ENCODE measurements at regions of chr17 and their contacts with region 1.

Region 1: DNA sequence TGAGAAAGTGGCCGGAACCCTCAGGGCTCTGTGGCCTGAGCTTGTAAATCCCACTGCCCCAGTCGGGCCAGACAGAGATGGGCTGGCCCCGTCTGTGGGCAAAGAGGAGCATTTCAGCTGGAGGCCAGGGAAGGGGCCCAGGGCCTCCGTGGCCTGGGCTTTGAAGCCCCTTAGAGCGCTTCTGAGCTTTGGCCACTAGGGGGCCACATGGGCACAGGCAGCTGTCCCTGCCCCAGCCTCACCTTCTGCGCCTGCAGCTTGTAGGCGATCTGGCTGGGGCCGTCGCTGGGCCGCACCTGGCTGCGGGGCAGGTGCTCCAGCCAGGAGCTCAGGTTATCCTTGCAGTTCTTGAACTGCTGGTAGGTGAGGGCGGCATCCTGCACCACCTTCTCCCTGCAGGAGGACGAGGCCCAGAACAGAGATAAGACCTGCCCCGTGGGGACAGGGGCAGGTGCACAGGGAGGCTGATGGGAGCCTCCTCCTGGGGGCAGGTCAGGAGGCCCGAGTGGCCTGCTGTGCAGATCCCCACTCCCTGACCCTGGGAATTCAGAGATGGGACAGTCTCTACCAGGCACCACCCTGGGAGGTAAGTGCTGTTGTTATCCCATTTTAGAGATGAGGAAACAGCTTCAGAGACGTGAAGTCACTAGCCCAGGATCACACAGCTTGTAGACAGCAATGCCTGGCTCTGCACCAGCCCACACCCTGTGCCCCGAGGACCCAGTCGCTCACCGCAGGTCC is 12.8 kb downstream of the EVPL start:
- DNase-seq: peak; percentile 85
- ATAC-seq: peak; percentile 98
- H3K4me3 Mint-ChIP-seq: no peak overlapping the region
- H3K27ac Mint-ChIP-seq: no peak overlapping the region
- H3K4me1 Mint-ChIP-seq: peaks cover 4% of the 10 kb centered on the region
- H3K27me3 Mint-ChIP-seq: no peaks in the 10 kb centered on the region

Region 2: DNA sequence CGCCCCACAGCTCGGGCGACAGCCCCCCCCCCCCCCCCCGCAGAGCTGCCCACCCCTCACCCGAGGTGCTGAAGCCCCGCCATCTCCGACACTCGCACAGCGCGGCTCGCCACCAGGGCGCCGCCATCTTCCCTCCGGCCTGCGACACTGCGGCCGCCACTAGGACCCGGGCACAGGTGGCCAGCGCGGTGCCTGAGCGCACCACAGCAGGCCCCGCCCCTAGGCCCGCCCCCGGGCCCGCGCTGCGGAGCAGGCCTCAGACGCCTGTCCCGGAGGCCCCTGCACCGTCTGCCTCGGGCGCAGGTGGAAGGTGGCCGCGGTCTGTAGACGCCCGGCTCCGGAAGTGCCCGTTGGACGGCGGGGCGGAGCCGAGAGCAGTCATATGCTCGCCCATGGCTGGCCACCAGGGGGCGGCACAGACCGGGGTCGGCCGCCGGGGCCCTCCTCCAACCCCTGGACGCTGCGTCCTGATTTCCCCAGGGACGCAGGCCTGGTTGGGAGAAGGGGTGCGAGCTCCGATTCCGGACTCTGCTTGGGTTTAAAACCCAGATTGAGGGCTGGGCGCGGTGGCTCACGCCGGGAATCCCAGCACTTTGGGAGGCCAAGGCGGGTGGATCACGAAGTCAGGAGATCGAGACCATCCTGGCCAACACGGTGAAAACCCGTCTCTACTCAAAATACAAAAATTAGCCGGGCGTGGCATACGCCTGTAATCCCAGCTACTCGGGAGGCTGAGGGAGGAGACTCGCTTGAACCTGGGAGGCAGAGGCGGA is 109.4 kb before region 1 on chr17 and contains the start of gene MRPL38:
- CTCF ChIA-PET with region 1: interaction called, 29 read pairs
- DNase-seq: peak; percentile 98
- ATAC-seq: peak; percentile 98
- H3K4me3 Mint-ChIP-seq: peak within 1 kb of the TSS; percentile 86
- H3K27ac Mint-ChIP-seq: peak within 1 kb of the TSS; percentile 85
- H3K4me1 Mint-ChIP-seq: peaks cover 20% of the 10 kb centered on the region
- H3K27me3 Mint-ChIP-seq: no peaks in the 10 kb centered on the region
- total RNA-seq, gene MRPL38: 115 to 139 TPM

Region 3: DNA sequence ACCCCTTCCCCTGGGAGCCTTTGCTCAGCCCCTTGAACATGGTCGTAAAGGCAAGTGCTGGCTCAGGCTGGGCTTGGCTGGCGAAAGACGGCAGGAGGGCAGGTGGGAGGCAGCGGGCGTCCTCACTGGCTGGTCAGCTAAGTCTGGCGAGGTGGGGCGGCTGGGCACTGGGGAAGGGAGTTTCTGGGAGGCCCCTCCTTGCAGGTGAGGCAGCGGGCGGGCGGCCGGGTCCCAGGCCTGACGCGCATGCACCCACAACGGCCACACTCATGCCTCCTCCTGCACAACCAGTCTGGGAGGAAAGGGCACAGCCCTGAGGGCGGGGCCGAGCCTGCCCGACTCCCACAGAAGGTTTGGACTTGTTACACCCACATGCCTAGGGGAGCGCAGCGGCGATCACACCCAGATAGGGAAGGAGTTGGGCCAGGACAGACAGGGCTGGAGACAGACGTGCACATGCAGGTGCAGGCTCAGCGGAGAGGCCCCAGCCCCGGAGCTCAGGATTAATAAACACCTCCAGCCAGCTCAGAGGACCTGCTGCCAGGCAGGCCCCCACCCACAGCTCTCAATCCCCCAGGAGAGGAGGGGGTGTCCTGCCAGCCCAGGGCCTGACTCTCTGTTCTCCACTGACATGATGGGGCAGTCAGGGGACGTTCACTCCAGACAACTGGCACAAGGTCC is 12.9 kb after region 1 on chr17 and contains the start of gene EVPL:
- CTCF ChIA-PET with region 1: interaction called, 21 read pairs
- DNase-seq: no peak
- ATAC-seq: no peak
- H3K4me3 Mint-ChIP-seq: no peak within 1 kb of the TSS
- H3K27ac Mint-ChIP-seq: no peak within 1 kb of the TSS
- H3K4me1 Mint-ChIP-seq: peaks cover 12% of the 10 kb centered on the region
- H3K27me3 Mint-ChIP-seq: no peaks in the 10 kb centered on the region
- total RNA-seq, gene EVPL: 0.03 TPM in 1 of 2 experiments, not detected in the other

Region 4: DNA sequence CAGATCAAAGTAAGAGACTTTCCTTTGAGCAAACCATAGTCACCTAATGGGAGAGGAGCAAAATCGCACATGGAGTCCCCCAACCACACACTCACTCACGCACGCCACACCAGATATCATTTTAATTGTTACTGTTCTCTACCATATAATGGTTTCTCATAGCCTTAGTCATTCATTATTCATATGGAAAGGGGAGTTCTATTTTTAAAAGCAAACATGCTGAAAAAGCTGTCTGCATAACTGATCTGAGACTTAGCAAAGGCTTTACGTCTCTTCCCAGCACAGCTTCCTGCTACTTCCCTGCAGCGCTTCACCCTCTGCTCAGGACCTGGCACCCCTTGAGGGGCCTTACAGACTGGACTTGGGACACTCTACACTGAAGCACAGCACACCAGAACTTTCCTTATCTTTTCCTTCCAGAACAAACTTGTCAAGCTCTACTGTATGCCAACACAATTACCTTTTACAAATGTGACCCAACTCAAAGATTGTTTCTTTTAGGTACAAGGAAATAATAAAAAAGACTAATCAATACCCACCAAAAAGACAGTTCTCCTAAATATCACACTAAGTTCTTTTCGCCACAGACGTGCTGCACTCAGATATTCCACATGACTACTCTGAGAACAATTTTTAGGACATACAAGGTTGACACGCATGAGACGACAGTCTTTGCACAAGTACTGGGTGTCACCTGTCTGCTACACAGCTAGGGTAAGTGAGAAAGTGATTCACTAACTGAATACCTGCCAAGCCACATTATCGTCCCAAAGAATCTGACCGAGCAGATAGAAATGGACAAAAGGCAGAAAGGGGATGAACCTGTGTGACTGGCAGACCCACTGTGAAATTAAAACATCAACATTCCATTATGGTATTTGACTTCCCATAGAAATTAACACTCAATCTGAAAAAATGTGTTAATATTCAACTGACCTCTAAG is 36.5 kb after region 1 on chr17:
- CTCF ChIA-PET with region 1: interaction called, 62 read pairs
- DNase-seq: no peak
- ATAC-seq: no peak
- H3K4me3 Mint-ChIP-seq: no peak overlapping the region
- H3K27ac Mint-ChIP-seq: no peak overlapping the region
- H3K4me1 Mint-ChIP-seq: peaks cover 6% of the 10 kb centered on the region
- H3K27me3 Mint-ChIP-seq: no peaks in the 10 kb centered on the region

Region 5: GRCh38 chr17:76063875-76064546 is 49.7 kb after region 1 on chr17:
- CTCF ChIA-PET with region 1: interaction called, 62 read pairs
- DNase-seq: peak; percentile 74
- ATAC-seq: peak; percentile 94
- H3K4me3 Mint-ChIP-seq: peak overlapping the region; percentile 57
- H3K27ac Mint-ChIP-seq: peak overlapping the region; percentile 87
- H3K4me1 Mint-ChIP-seq: peaks cover 25% of the 10 kb centered on the region
- H3K27me3 Mint-ChIP-seq: no peaks in the 10 kb centered on the region

Region 6: GRCh38 chr17:76103274-76104139 is 89.2 kb after region 1 on chr17 and contains the start of gene EXOC7:
- CTCF ChIA-PET with region 1: interaction called, 21 read pairs
- DNase-seq: peak; percentile 94
- ATAC-seq: peak; percentile 94
- H3K4me3 Mint-ChIP-seq: peak within 1 kb of the TSS; percentile 98
- H3K27ac Mint-ChIP-seq: peak within 1 kb of the TSS; percentile 97
- H3K4me1 Mint-ChIP-seq: peaks cover 16% of the 10 kb centered on the region
- H3K27me3 Mint-ChIP-seq: no peaks in the 10 kb centered on the region
- total RNA-seq, gene EXOC7: 132 to 137 TPM

Region 7: GRCh38 chr17:76296186-76296585 is 281.8 kb after region 1 on chr17:
- CTCF ChIA-PET with region 1: interaction called, 46 read pairs
- DNase-seq: no peak
- ATAC-seq: no peak
- H3K4me3 Mint-ChIP-seq: no peak overlapping the region
- H3K27ac Mint-ChIP-seq: no peak overlapping the region
- H3K4me1 Mint-ChIP-seq: peaks cover 3% of the 10 kb centered on the region
- H3K27me3 Mint-ChIP-seq: no peaks in the 10 kb centered on the region

Region 8: DNA sequence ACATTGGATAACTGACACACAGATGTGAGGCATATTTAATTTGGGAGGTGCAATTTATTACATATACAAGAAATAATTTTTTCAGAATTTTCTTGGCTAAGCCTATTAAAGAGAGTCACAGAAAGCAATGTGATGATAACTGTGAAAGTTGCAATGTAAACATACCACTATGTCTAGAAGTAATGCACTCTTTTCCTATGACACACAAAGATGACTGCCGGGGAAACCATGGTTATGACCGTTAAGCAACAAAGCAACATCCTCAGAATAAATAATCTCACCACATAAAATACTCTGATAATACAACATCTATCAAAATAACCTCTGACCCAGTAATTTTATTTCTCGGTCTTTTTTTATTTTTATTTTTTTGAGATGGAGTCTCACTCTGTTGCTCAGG is 304.2 kb after region 1 on chr17:
- CTCF ChIA-PET with region 1: no interaction called
- DNase-seq: no peak
- ATAC-seq: no peak
- H3K4me3 Mint-ChIP-seq: no peak overlapping the region
- H3K27ac Mint-ChIP-seq: no peak overlapping the region
- H3K4me1 Mint-ChIP-seq: peaks cover 3% of the 10 kb centered on the region
- H3K27me3 Mint-ChIP-seq: no peaks in the 10 kb centered on the region

Region 9: GRCh38 chr17:76370261-76370993 is 356.1 kb after region 1 on chr17:
- CTCF ChIA-PET with region 1: no interaction called
- DNase-seq: no peak
- ATAC-seq: no peak
- H3K4me3 Mint-ChIP-seq: no peak overlapping the region
- H3K27ac Mint-ChIP-seq: no peak overlapping the region
- H3K4me1 Mint-ChIP-seq: no peaks in the 10 kb centered on the region
- H3K27me3 Mint-ChIP-seq: no peaks in the 10 kb centered on the region

Region 10: GRCh38 chr17:76437467-76438402 is 423.4 kb after region 1 on chr17:
- CTCF ChIA-PET with region 1: no interaction called
- DNase-seq: no peak
- ATAC-seq: no peak
- H3K4me3 Mint-ChIP-seq: no peak overlapping the region
- H3K27ac Mint-ChIP-seq: no peak overlapping the region
- H3K4me1 Mint-ChIP-seq: peaks cover 21% of the 10 kb centered on the region
- H3K27me3 Mint-ChIP-seq: no peaks in the 10 kb centered on the region